B cell (primary cell): ENCODE measurements at regions of chr7 and their contacts with region 1.

Region 1: GRCh38 chr7:28626624-28627262 is 214.4 kb downstream of the CREB5 start:
- DNase-seq: peak; percentile 45
- ATAC-seq: no peak
- H3K4me3 ChIP-seq: no peak overlapping the region
- H3K4me3 Mint-ChIP-seq: no peak overlapping the region
- H3K27ac ChIP-seq: no peak overlapping the region
- H3K27ac Mint-ChIP-seq: no peak overlapping the region
- H3K4me1 ChIP-seq: no peaks in the 10 kb centered on the region
- H3K4me1 Mint-ChIP-seq: no peaks in the 10 kb centered on the region
- H3K27me3 ChIP-seq: peaks cover 0 to 6% (median 2%) of the 10 kb centered on the region in 4 experiments
- H3K27me3 Mint-ChIP-seq: peaks cover 25% of the 10 kb centered on the region
- CTCF ChIP-seq: peak; percentile 79

Region 2: DNA sequence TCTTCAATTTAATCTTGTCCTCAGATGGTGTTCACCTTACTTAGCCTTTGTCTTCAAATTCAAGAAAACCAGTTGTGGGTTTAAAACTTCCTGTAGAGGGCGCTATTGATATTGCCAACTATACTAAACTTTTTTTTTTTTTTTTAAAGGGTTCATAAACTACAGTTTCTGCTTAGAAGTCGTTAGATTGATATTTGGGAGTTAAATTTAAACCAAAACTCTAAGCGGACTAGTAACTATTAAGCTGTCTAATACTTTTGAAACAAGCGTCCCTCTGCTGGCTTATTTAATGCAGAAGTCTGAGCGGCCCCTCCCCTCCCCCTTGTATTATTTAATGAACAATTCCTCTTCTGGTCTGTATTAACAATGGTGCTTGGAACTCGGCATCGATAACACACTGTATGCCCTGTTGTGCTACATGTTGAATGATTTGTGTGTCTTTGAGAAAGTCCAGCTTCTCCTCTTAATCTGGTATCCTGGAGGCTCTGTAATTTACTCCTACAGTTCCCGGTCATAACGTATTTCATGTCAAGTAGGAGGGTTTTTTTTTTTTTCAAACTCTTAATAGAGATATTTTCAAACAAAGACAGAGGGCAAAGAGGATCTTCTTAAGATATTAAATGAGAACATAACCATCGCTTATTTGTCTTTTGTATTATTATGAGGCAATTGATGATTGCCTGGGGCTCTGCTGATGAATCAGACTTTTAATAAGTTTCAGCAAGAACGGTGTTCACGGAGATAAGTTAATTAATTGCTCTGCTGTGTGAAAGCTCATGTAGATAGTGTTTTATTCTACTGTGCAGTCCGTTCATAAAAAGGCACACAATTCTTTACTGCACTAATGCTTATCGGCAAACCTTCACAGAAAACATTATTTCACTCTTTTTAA is 237.0 kb before region 1 on chr7:
- CTCF ChIA-PET with region 1: interaction called, 28 read pairs
- POLR2A ChIA-PET with region 1: no interaction called
- intact Hi-C with region 1: no loop called
- DNase-seq: peak; percentile 71
- ATAC-seq: peak; percentile 33
- H3K4me3 ChIP-seq: no peak overlapping the region
- H3K4me3 Mint-ChIP-seq: no peak overlapping the region
- H3K27ac ChIP-seq: no peak overlapping the region
- H3K27ac Mint-ChIP-seq: no peak overlapping the region
- H3K4me1 ChIP-seq: peaks cover 3 to 4% of the 10 kb centered on the region in 2 donors
- H3K4me1 Mint-ChIP-seq: peaks cover 2% of the 10 kb centered on the region
- H3K27me3 ChIP-seq: peaks cover 0 to 13% (median 6%) of the 10 kb centered on the region in 4 experiments
- H3K27me3 Mint-ChIP-seq: peaks cover 36% of the 10 kb centered on the region
- CTCF ChIP-seq: peak; percentile 90